ENCODE measurements at regions of chr10 and their contacts with region 1.

Region 1: GRCh38 chr10:47311932-47312662 is 10.2 kb upstream of the GDF2 start:
- DNase-seq: peak; percentile 70 to 98 (median 89)

Region 2: GRCh38 chr10:47024399-47025252 is 287.5 kb before region 1 on chr10:
- intact Hi-C with region 1: loop called (anchors 1 kb)
- DNase-seq: peak; percentile 51 to 96 (median 78)

Region 3: GRCh38 chr10:47044741-47045140 is 267.4 kb before region 1 on chr10:
- intact Hi-C with region 1: loop called (anchors 1 kb)
- DNase-seq: peak in 2 of 10 donors; percentile 13 to 82

Region 4: DNA sequence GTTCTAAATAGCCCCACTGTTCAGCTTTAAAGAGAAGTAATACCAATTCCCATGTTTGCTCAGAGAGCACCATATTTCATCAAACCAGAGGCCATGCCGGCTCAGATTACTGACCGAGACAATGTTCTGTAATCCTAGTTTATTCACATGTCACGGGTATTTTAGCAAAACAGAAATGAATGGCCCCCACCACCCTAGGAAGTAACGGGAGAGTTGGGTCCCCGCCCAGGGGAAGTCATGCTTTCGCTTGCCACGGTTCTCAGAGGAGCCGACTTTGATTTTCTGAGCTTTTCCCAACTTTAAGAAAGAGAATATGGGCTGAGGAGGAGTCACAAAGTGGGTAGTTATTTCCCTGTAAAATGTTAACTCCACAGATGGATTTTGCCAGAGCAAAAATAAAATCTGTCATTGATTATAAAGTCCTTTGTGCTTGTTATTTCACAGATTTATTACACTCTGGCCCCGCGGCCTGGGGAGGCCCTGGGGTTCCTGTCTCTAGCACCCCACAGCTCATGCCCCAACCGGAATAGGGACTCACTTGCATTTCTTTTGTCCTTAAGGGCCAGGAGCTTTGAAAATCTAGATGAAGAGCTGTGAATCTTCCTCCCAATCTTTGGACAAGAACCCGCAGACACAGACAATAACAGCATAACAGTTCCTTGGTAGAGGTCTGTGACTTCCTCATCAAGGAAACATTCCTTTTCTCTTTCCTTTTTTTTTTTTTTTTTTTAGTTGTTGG is 15.8 kb before region 1 on chr10:
- intact Hi-C with region 1: no loop called
- DNase-seq: peak in 2 of 10 donors; percentile 41 to 52